ENCODE measurements at regions of chr17 and their contacts with region 1.

Region 1: DNA sequence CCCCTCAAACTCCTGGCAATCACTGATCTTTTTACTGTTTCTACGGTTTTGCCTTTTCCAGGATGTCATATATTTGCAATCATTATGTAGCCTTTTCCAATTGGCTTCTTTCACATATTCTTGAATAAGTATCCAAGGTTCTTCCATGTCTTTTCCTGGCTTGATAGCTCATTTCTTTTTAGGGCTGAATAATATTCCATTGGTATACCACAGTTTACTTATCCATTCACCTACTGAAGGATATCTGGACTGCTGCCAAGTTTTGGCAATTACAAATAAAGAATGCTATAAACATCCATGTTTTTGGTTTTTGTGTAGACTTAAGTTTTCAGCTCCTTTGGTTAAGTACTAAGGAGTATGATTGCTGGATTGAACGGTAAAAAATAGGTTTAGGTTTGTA is 16.0 kb downstream of the GPATCH8 start:
- DNase-seq: no peak
- ATAC-seq: no peak
- H3K4me3 Mint-ChIP-seq: no peak overlapping the region
- H3K27ac Mint-ChIP-seq: no peak overlapping the region
- H3K4me1 Mint-ChIP-seq: peaks cover 24% of the 10 kb centered on the region
- H3K27me3 Mint-ChIP-seq: no peaks in the 10 kb centered on the region
- CTCF ChIP-seq: no peak

Region 2: GRCh38 chr17:44473367-44473766 is 13.8 kb before region 1 on chr17:
- CTCF ChIA-PET with region 1: no interaction called
- POLR2A ChIA-PET with region 1: no interaction called
- intact Hi-C with region 1: loop called (anchors 2 kb)
- DNase-seq: no peak
- ATAC-seq: no peak
- H3K4me3 Mint-ChIP-seq: no peak overlapping the region
- H3K27ac Mint-ChIP-seq: no peak overlapping the region
- H3K4me1 Mint-ChIP-seq: peaks cover 1% of the 10 kb centered on the region
- H3K27me3 Mint-ChIP-seq: no peaks in the 10 kb centered on the region
- CTCF ChIP-seq: no peak

Region 3: DNA sequence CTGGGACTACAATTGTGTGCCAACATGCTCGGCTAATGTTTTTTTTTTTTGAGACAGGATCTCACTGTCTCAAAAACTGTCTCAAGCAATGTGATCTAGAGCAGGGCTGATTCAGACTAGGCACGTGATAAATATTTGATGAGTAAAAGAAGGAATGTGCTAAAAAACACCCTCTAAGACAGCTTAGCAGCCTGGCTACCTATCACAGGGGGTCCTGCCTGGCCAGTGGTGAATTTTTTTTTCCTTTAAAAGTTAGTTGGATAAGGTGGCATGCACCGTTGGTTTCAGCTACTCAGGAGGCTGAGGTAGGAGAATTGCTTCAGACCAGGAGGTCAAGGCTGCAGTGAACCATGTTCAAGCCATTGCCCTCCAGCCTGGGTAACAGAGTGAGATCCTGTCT is 30.9 kb after region 1 on chr17:
- CTCF ChIA-PET with region 1: no interaction called
- POLR2A ChIA-PET with region 1: interaction called, 13 read pairs
- intact Hi-C with region 1: no loop called
- DNase-seq: no peak
- ATAC-seq: no peak
- H3K4me3 Mint-ChIP-seq: no peak overlapping the region
- H3K27ac Mint-ChIP-seq: no peak overlapping the region
- H3K4me1 Mint-ChIP-seq: no peaks in the 10 kb centered on the region
- H3K27me3 Mint-ChIP-seq: peaks cover 17% of the 10 kb centered on the region
- CTCF ChIP-seq: no peak

Measured in activated B cell treated with CpG ODN at 0.5 μM for 24 hours (primary cell).